Activated CD4-positive, alpha-beta memory T cell treated with anti-CD3 and anti-CD28 coated beads for 36 hours (primary cell): ENCODE measurements at regions of chr3 and their contacts with region 1.

Region 1: DNA sequence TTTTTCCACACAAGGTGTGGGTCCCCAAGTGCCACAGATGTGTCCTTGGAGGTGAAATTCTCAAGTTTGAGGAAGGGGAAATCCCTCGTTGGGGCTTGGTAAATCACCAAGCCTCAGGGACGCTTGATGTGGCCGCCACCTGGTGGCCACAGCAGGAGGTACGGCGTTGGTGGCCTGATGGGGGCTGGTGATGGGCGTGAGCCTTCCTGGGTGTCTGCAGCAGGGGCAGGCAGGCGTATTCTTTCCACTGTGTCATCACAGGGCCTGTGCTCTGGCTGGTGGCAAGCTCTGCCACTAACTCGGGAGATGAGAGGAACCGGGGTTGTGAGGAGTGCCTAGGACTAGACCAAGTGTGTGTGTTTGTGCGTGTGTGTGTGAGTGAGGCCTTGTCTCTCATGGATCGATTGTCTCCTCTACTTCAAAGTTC is 4.2 kb downstream of the ACOX2 start:
- DNase-seq: peak; percentile 91
- H3K4me3 Mint-ChIP-seq: no peak overlapping the region
- H3K27ac Mint-ChIP-seq: no peak overlapping the region
- H3K4me1 Mint-ChIP-seq: peaks cover 12% of the 10 kb centered on the region
- H3K27me3 Mint-ChIP-seq: no peaks in the 10 kb centered on the region

Region 2: DNA sequence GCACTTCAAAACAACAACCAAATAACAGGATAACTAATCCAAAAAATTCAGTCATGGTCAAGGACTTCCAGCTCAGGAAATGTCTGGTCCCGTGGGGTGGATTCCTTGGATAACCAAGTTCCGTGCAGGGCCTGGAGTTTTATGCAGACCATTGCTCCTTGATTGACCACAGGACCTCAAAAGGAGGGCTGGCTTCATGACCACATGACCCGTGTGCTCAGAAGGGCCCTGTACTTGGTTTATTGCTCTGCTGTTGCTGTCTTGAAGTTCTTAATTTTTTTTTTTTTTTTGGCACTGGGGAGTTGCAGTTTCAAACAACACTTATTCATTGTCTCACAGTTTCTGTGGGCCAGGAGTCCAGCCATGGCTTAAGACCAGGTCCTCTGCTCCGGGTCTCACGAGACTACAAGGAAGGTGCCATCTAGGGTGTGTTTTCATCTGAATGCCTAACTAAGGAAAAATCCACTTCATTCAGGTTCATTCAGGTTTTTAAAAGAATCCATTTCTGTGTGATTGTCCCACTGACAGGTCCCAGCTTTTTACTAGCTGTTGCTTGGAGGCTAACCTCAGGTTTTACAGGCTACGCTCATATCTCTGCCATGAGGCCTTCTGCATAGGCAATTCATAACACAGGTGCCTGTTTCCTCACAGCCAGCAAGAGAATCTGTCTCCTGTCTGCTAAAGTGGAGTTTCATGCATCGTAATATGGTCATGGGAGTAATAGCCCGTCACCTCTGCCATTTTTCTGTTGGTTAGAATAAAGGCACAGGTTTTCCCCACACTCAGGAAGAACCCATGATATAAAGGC is 459.3 kb before region 1 on chr3:
- CTCF ChIA-PET with region 1: no interaction called
- POLR2A ChIA-PET with region 1: no interaction called
- intact Hi-C with region 1: no loop called
- DNase-seq: no peak
- H3K4me3 Mint-ChIP-seq: no peak overlapping the region
- H3K27ac Mint-ChIP-seq: no peak overlapping the region
- H3K4me1 Mint-ChIP-seq: peaks cover 22% of the 10 kb centered on the region
- H3K27me3 Mint-ChIP-seq: no peaks in the 10 kb centered on the region

Region 3: GRCh38 chr3:58188173-58188564 is 344.6 kb before region 1 on chr3:
- CTCF ChIA-PET with region 1: interaction called, 3 read pairs
- POLR2A ChIA-PET with region 1: no interaction called
- intact Hi-C with region 1: loop called (anchors 2 kb)
- DNase-seq: no peak
- H3K4me3 Mint-ChIP-seq: no peak overlapping the region
- H3K27ac Mint-ChIP-seq: no peak overlapping the region
- H3K4me1 Mint-ChIP-seq: no peaks in the 10 kb centered on the region
- H3K27me3 Mint-ChIP-seq: no peaks in the 10 kb centered on the region

Region 4: DNA sequence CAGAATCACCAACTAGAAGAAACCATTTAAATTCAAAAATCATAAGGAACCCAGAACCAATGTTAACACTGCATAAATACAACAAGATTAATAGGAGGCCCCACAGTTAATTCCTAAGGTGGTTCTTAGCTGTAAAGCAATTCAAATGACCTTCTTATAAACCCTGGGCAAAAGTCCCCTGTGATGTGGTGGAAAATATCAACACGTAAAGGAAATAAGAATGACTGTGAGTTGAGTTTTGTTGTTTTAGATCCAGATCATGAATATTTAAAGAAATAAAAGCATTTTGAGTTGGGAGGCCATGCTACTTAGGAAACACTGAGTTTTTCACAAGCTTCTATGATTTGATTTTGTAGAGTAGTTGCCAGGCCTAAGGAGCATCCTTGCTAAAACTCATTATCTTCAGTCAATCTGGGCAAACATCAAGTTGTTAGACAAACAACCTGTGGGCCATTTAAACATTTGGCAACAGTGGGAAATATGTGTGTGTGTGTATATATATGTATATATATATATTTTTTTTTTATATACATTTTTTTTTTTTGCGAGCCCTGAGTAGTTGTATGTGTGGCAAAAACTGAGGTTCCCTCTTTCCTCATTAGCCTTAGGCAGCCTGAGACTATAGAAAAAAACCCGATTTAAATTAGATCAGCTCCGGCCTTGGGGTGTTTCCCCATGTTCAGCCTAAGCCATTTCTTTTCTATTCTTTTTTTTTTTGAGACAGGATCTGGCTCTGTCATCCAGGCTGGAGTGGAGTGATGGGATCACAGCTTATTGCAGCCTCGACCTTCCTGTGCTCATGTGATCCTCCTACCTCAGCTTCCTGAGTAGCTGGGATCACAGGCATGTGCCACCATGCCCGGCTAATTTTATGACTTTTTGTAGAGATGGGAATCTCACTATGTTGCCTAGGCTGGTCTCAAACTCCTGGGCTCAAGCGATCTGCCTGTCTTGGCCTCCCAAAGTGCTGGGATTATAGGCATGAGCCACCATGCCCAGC is 208.1 kb before region 1 on chr3:
- CTCF ChIA-PET with region 1: interaction called, 9 read pairs
- POLR2A ChIA-PET with region 1: no interaction called
- intact Hi-C with region 1: loop called (anchors 1 kb)
- DNase-seq: no peak
- H3K4me3 Mint-ChIP-seq: peak overlapping the region; percentile 34
- H3K27ac Mint-ChIP-seq: peak overlapping the region; percentile 93
- H3K4me1 Mint-ChIP-seq: peaks cover 37% of the 10 kb centered on the region
- H3K27me3 Mint-ChIP-seq: no peaks in the 10 kb centered on the region

Region 5: DNA sequence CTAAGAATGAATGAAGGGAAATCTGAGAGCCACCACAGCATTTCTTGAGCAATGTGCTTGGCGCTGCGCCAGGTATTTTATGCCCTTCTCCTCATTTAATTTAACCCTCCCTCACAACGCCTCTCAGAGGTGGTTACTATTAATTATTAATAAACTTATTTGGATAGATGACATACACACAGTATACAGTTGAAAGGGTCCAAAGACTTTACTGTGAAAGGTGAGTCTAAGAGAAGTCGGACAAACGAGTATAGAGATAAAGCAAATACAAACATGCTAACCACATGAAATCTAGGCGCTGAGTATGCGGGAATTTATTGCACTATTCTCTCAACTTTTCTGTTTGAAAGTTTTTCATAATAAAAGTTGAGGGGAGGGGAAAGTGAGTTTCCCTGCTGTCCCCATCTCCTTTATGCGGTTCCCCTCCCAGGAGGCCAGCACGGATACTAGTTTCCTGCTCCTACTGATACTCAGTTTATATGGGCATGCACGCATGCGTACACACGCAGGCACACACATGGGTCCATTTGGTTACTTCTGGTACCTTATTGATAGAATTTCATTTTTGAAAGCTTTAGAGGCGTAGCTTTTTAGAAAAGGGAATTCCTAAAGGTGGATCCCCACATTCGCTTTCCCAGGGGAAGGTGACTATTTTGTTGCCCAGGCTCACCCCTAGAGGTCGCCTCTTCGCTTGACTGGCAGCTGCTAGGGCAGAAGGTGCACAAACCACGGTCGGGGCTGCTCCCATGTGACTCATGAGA is 69.4 kb before region 1 on chr3:
- CTCF ChIA-PET with region 1: interaction called, 7 read pairs
- POLR2A ChIA-PET with region 1: no interaction called
- intact Hi-C with region 1: loop called (anchors 1 kb)
- DNase-seq: peak; percentile 90
- H3K4me3 Mint-ChIP-seq: no peak overlapping the region
- H3K27ac Mint-ChIP-seq: peak overlapping the region; percentile 54
- H3K4me1 Mint-ChIP-seq: peaks cover 17% of the 10 kb centered on the region
- H3K27me3 Mint-ChIP-seq: no peaks in the 10 kb centered on the region

Region 6: DNA sequence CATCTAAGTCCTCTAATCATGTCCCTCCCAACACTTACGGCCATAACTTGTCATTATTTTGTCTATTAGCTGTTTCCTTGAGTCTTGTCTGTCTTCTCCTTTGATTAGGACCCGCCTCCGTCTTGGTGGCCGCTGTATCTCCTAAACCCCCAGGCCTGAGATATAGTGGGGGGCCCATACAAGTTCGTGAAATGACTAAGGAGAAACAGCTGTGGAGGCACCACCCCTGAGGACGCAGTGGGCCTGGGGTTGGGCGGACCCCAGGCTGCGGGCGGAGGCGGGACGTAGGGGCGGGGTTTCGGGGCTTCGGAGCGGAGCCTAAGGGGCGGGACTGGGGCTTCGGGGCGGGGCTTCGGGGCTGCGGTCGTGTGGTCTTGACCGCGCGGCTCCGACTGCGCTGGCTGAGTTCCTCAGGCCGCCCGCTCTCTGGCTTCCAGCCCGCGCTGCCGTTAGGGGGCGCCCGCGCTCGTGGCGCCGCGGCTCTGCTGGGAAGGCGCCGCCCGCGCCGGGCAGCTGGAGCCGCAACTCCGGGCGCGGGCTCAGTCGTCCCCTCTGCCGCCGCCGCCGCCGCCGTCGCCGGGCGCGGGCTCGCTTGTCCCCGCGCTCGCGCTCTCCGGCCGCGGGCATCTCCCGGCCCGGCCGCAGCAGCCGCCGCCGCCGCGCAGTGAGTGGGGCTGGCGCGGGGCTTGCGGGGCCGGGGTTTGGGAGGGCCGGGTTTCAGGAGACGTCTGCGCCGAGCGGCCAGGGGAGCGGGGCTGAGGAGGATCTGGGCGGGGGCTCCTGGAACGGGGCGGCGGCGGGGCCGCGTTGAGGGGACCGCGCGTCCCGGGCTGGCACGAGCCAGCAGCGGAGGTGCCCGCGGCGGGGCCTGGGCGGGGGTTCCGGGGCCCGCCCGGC is 41.1 kb before region 1 on chr3 and contains the start of gene KCTD6:
- CTCF ChIA-PET with region 1: interaction called, 8 read pairs
- POLR2A ChIA-PET with region 1: no interaction called
- intact Hi-C with region 1: loop called (anchors 1 kb)
- DNase-seq: peak; percentile 90
- H3K4me3 Mint-ChIP-seq: peak within 1 kb of the TSS; percentile 90
- H3K27ac Mint-ChIP-seq: peak within 1 kb of the TSS; percentile 77
- H3K4me1 Mint-ChIP-seq: peaks cover 52% of the 10 kb centered on the region
- H3K27me3 Mint-ChIP-seq: peaks cover 3% of the 10 kb centered on the region
- total RNA-seq, gene KCTD6: 8.0 to 8.6 TPM